Activated CD4-positive, alpha-beta T cell treated with anti-CD3 and anti-CD28 coated beads for 36 hours (primary cell): ENCODE measurements at regions of chr2 and their contacts with region 1.

Region 1: GRCh38 chr2:162301151-162301804 is 17.2 kb downstream of the IFIH1 start:
- DNase-seq: peak; percentile 74
- ATAC-seq: peak; percentile 73
- H3K4me3 Mint-ChIP-seq: no peak overlapping the region
- H3K27ac Mint-ChIP-seq: no peak overlapping the region
- H3K4me1 Mint-ChIP-seq: no peaks in the 10 kb centered on the region
- H3K27me3 Mint-ChIP-seq: no peaks in the 10 kb centered on the region

Region 2: DNA sequence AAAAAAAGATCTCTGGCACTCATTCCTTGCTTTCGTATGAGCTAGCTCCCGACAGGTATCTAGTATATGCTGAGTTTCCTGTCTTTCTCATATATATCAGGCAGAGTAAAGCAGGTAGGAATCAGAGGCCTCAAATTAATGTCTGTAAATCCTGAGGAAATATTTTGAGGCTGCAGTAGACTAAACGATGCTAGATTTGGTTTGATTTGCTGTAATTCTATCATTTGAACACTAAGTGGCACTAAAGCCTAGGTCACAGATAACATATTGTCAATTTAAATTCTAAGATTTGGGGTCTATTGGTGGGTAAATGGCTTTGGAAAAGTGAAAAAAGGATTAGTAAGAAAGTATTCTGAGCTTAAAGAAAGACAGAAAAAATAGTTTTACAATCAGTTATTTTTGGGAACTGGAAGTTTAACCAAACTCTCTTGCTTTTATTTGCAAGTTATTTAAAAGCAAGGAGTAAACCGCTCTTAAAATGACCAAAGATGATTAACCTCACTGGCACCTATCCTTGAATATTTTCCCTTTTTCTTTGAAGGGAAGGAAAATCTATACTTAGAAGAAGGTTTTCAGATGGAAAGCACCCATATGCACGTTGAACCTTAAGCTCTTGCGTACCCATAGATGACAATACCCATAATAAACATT is 714.6 kb before region 1 on chr2:
- CTCF ChIA-PET with region 1: interaction called, 4 read pairs
- POLR2A ChIA-PET with region 1: no interaction called
- intact Hi-C with region 1: loop called (anchors 1 to 2 kb)
- DNase-seq: no peak
- ATAC-seq: no peak
- H3K4me3 Mint-ChIP-seq: no peak overlapping the region
- H3K27ac Mint-ChIP-seq: no peak overlapping the region
- H3K4me1 Mint-ChIP-seq: no peaks in the 10 kb centered on the region
- H3K27me3 Mint-ChIP-seq: peaks cover 7% of the 10 kb centered on the region

Region 3: DNA sequence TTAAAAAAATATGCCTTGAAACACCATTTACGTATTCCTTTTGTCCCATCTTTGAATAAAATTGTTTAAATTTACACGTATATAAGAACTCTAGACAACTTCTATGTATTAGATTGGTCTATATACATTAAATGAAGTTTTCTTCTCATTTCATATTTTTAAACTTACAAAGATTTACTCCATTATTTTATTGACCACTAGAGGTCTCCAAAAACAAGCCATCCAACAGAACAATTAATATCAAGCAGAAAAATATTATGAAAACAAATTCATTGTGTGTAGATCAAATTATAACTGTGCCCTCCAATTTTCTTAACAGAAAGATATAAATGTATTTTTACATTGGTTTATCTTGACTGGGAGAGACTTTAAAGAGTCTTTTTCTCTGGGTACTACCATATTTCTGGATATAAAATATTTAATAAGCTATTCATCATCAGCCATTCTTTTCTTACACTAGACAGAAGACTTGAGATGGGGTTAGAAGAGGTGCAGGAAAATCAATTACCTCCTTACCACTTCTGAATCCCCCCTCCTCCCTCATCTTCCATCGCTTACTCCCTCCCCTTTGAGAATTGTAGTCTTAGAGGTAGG is 293.7 kb before region 1 on chr2:
- CTCF ChIA-PET with region 1: interaction called, 3 read pairs
- POLR2A ChIA-PET with region 1: no interaction called
- intact Hi-C with region 1: loop called in 1 of 2 experiments (anchors 5 kb)
- DNase-seq: no peak
- ATAC-seq: no peak
- H3K4me3 Mint-ChIP-seq: no peak overlapping the region
- H3K27ac Mint-ChIP-seq: no peak overlapping the region
- H3K4me1 Mint-ChIP-seq: peaks cover 43% of the 10 kb centered on the region
- H3K27me3 Mint-ChIP-seq: no peaks in the 10 kb centered on the region

Region 4: DNA sequence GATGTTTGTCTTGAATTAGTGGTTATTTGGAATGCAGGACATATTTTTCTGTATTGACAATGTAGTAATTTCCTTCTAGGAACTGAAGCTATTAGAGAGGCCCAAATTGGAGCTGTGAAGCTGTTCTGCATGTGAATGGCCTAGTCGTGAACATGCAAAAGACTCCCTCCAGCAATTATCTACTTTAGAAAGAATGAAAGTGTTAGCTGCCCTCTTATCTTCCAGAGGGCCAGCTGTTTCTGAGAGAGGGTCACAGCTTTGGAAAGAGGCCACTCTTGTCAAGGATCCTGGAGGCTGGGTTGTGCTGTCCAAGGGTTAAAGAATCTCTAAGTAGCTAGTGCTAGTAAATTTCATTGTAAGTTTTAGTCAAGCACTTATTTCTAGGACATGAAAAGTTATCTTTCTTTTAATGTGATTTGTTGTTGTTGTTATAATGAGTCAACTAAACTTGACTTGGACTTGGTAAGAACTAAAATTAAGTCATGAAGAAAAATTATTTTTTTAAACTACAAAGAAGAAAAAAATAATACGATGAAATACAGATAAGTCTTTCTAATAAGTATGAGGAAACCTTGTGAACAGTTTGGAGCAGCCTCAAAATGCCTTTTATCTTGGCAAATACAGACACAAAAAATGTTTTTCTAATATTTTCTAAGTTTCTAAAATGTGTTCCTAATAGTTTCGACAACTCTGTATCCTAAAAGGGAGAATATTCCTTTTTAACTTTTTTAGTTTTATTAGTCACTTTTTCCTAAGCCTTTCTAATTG is 264.1 kb before region 1 on chr2:
- CTCF ChIA-PET with region 1: no interaction called
- POLR2A ChIA-PET with region 1: no interaction called
- intact Hi-C with region 1: no loop called
- DNase-seq: no peak
- ATAC-seq: no peak
- H3K4me3 Mint-ChIP-seq: no peak overlapping the region
- H3K27ac Mint-ChIP-seq: no peak overlapping the region
- H3K4me1 Mint-ChIP-seq: no peaks in the 10 kb centered on the region
- H3K27me3 Mint-ChIP-seq: no peaks in the 10 kb centered on the region

Region 5: GRCh38 chr2:162153608-162154224 is 147.6 kb before region 1 on chr2:
- CTCF ChIA-PET with region 1: interaction called, 87 read pairs
- POLR2A ChIA-PET with region 1: no interaction called
- intact Hi-C with region 1: loop called (anchors 1 kb)
- DNase-seq: peak; percentile 76
- ATAC-seq: peak; percentile 95
- H3K4me3 Mint-ChIP-seq: no peak overlapping the region
- H3K27ac Mint-ChIP-seq: no peak overlapping the region
- H3K4me1 Mint-ChIP-seq: no peaks in the 10 kb centered on the region
- H3K27me3 Mint-ChIP-seq: peaks cover 26% of the 10 kb centered on the region

Region 6: GRCh38 chr2:162221064-162221463 is 80.2 kb before region 1 on chr2:
- CTCF ChIA-PET with region 1: interaction called, 246 read pairs
- POLR2A ChIA-PET with region 1: interaction called, 6 read pairs
- intact Hi-C with region 1: loop called (anchors 1 kb)
- DNase-seq: peak; percentile 75
- ATAC-seq: peak; percentile 57
- H3K4me3 Mint-ChIP-seq: no peak overlapping the region
- H3K27ac Mint-ChIP-seq: no peak overlapping the region
- H3K4me1 Mint-ChIP-seq: no peaks in the 10 kb centered on the region
- H3K27me3 Mint-ChIP-seq: peaks cover 16% of the 10 kb centered on the region

Region 7: DNA sequence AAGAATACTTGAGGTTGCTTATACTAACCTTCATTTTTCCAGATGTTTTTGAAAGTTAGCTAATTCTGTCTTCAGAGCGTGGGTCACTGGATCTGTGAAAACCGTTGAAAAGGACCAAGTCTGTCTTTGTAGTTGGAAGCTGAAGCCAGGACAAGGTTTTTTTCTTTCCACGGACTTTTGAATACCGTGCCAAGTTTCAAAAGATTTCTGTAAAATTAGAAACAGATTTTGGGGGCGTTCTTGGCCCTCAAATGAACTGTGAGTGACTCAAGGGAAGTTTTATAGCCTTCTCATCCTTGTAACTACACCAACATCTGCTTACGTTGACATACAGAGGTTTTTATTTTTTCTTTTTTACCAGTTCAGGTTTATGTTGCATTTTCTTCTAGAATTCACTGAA is 58.0 kb before region 1 on chr2 and contains the start of gene FAP:
- CTCF ChIA-PET with region 1: interaction called, 19 read pairs
- POLR2A ChIA-PET with region 1: no interaction called
- intact Hi-C with region 1: no loop called
- DNase-seq: no peak
- ATAC-seq: no peak
- H3K4me3 Mint-ChIP-seq: no peak within 1 kb of the TSS
- H3K27ac Mint-ChIP-seq: no peak within 1 kb of the TSS
- H3K4me1 Mint-ChIP-seq: no peaks in the 10 kb centered on the region
- H3K27me3 Mint-ChIP-seq: peaks cover 26% of the 10 kb centered on the region
- total RNA-seq, gene FAP: not detected

Region 8: GRCh38 chr2:162282765-162283425 is 18.4 kb before region 1 on chr2:
- CTCF ChIA-PET with region 1: interaction called, 17 read pairs
- POLR2A ChIA-PET with region 1: no interaction called
- intact Hi-C with region 1: no loop called
- DNase-seq: no peak
- ATAC-seq: no peak
- H3K4me3 Mint-ChIP-seq: no peak overlapping the region
- H3K27ac Mint-ChIP-seq: no peak overlapping the region
- H3K4me1 Mint-ChIP-seq: no peaks in the 10 kb centered on the region
- H3K27me3 Mint-ChIP-seq: no peaks in the 10 kb centered on the region